Aorta (tissue), 5 donors: ENCODE measurements at regions of chr6 and their contacts with region 1.

Region 1: DNA sequence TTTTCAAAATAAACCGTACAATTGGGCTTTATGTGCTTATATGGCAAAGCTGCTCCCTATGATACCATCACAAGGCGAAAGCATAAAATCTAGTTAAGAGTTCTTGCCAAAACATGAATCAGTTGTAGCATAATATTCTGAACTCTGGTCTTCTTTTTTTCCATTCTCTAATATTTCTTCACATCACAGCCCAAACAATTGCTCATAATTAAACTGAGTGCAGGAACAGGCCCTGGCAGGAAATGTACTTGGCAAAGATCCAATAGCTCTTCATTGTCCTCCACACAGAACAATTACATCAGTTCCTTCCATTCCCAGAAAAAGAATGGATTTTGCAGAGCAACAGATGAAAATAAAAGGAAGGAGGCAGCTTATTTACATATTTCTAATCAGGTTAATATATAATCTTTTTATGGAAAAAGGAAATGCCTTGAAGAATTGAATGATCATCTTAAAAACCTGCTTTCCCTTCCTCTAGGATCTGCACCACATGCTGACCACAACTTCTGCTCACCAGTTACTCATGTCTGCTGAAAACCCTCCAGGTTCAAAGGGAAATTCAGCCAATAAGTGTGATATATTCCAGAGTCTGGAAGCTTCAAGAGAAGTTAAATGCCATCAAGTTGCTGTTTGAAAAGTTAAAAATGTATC is 123.3 kb upstream of the COL21A1 start:
- DNase-seq: no peak
- ATAC-seq: peak; percentile 81
- H3K4me3 ChIP-seq: no peak overlapping the region
- H3K27ac ChIP-seq: peak overlapping the region; percentile 79 to 95
- H3K4me1 ChIP-seq: peaks cover 9 to 10% of the 10 kb centered on the region in 2 donors
- H3K27me3 ChIP-seq: no peaks in the 10 kb centered on the region

Region 2: DNA sequence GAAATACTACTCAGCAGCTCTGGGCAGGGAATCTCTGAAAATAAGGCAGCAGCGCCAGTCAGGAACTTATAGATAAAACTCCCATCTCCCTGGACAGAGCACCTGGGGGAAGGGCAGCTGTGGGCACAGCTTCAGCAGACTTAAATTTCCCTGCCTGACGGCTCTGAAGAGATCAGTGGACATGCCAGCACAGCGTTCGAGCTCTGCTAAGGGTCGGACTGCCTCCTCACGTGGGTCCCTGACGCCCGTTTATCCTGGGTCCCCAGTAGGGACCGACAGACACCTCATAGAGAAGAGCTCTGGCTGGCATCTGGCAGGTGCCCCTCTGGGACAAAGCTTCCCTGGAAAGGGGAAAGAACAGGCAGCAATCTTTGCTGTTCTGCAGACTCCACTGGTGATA is 182.3 kb before region 1 on chr6:
- intact Hi-C with region 1: no loop called
- DNase-seq: no peak
- ATAC-seq: no peak
- H3K4me3 ChIP-seq: peak overlapping the region in 1 of 2 donors; percentile 14
- H3K27ac ChIP-seq: no peak overlapping the region
- H3K4me1 ChIP-seq: no peaks in the 10 kb centered on the region
- H3K27me3 ChIP-seq: no peaks in the 10 kb centered on the region

Region 3: DNA sequence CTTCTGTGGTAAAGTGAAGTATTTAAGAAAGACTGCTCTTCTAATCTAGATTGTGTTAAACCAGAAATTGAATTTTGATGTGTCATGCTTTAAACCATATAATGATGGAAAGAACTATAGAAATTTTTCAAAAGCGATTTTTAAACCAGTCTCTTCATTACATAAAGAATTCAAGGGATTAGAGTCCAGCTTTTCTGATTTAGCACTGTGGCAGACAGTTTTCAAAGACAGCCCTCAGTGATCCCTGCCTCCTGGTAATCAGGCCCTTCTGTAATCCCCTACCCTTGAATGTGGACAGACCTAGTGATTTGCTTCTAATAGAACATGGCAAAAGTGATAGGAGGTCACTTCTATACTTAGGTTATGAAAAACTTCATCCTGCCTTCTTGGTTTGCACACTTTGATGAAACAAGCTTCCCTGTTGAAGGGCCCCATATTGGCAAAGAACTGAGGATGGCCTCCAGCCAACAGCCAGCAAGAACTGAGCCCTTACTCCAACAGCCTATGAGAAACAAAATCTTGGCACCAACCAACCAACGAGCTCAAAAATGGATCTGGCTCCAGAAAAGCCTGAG is 80.6 kb after region 1 on chr6:
- intact Hi-C with region 1: loop called in 1 of 2 experiments (anchors 5 kb)
- DNase-seq: peak in 1 of 2 donors; percentile 85
- ATAC-seq: peak; percentile 69
- H3K4me3 ChIP-seq: no peak overlapping the region
- H3K27ac ChIP-seq: peak overlapping the region; percentile 51 to 54
- H3K4me1 ChIP-seq: peaks cover 2 to 6% of the 10 kb centered on the region in 2 donors
- H3K27me3 ChIP-seq: no peaks in the 10 kb centered on the region

Region 4: GRCh38 chr6:56542364-56543331 is 172.0 kb after region 1 on chr6:
- intact Hi-C with region 1: loop called in 1 of 2 experiments (anchors 5 kb)
- DNase-seq: peak; percentile 96
- ATAC-seq: peak; percentile 96
- H3K4me3 ChIP-seq: peak overlapping the region; percentile 83 to 85
- H3K27ac ChIP-seq: peak overlapping the region; percentile 71 to 87
- H3K4me1 ChIP-seq: no peaks in the 10 kb centered on the region
- H3K27me3 ChIP-seq: no peaks in the 10 kb centered on the region